ENCODE measurements at regions of chr18 and their contacts with region 1.

Region 1: DNA sequence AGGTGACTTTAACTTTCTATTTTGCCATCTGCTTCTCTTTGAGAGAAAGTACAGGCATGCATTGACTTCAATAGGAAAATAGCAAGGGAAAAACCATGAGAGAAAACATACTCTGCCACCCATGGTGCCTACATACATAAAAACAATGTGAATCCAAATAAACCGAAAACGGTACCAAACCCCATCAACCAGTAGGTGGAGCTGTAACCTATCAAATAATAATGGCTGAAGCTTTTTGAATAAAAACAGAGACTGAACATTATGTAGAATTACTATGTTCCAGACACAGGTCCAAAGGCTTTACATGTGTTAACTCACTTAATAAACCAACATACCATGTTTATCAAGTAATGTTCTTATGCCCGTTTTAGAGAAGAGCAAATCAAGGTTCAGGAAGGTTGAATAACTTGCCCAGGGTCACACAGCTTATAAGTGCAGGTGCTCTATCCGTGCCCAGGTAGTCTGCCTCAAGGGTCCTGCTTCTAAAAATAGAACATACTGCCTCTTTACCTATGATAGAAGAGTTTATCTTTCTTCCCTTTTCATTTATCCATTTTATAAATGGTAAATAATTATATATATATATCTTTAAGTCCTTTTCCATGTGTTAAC is 293.9 kb upstream of the SYT4 start:
- DNase-seq: peak; percentile 28
- H3K4me3 Mint-ChIP-seq: no peak overlapping the region
- H3K27ac Mint-ChIP-seq: no peak overlapping the region
- H3K4me1 Mint-ChIP-seq: no peaks in the 10 kb centered on the region
- H3K27me3 Mint-ChIP-seq: no peaks in the 10 kb centered on the region

Region 2: DNA sequence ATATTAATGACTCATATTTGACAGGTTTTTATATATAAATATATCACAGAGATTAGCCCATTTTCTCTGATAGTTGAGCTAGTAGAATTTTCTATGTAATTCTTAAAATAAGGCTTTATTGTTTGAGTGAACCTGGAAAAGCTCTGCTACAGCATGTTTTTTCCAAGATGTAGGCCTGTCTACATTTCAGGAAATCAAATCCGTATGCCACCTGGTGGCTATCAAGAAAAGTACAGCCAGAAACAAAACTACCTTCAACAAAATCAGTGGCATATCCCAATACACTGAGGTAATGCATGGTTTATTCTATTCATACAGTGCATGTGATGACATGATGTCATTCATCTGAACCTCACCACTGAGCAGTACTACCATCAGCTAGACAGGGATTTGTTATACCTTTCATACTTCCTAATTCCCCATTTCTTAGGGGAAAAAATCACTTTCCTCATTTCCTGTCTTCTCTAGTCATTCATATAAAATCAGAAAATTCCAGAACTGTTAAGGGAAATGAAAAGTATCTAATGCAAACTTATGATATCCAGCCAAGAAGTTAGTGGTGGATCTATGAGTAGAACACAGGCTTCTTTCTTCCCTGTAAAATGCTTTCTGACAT is 16.5 kb after region 1 on chr18:
- CTCF ChIA-PET with region 1: interaction called, 35 read pairs
- intact Hi-C with region 1: loop called (anchors 2 kb)
- DNase-seq: no peak
- H3K4me3 Mint-ChIP-seq: no peak overlapping the region
- H3K27ac Mint-ChIP-seq: no peak overlapping the region
- H3K4me1 Mint-ChIP-seq: no peaks in the 10 kb centered on the region
- H3K27me3 Mint-ChIP-seq: no peaks in the 10 kb centered on the region

Region 3: GRCh38 chr18:43596105-43596712 is 25.0 kb after region 1 on chr18:
- CTCF ChIA-PET with region 1: interaction called, 12 read pairs
- intact Hi-C with region 1: no loop called
- DNase-seq: no peak
- H3K4me3 Mint-ChIP-seq: no peak overlapping the region
- H3K27ac Mint-ChIP-seq: no peak overlapping the region
- H3K4me1 Mint-ChIP-seq: no peaks in the 10 kb centered on the region
- H3K27me3 Mint-ChIP-seq: peaks cover 3% of the 10 kb centered on the region

Region 4: DNA sequence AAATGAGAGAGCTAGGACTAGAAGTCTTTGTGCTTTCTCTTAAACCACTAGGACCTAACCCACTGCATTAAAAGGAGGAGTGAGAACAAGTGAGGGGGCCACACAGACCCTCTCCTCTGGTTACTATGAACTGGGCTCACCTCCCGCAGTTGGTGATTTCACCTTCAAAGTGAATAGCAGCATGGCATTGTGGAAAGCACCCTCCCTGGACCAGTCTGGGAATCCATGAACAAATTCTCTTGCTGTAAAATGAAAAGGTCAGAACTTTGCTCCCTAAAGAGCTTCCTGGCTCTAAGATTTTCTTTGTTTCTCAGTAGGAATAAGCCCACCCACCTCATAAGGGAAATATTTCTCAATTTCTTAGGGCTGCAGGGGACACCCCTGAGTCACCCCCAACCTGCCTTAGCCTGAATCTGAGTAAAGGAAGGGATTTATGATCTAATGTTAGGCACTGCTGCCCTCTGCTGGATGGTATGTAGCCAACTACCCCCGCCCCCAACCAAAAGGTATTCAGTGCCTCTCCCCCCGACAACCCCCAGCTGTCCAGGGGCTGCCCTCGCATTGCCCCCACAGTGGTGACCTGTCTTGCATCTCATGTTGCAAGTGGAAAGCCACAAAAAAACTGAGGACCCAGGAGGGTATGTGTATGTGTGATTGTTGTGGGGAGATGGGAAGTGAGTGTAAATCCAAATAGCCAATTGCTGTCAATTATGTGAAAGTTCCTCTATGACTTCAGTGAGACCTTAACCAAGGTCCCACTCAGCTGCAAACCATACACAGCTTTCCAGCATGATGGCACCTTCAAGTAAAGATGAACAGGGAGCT is 1813.2 kb after region 1 on chr18:
- CTCF ChIA-PET with region 1: interaction called, 3 read pairs
- intact Hi-C with region 1: loop called (anchors 1 kb)
- DNase-seq: peak; percentile 59
- H3K4me3 Mint-ChIP-seq: no peak overlapping the region
- H3K27ac Mint-ChIP-seq: no peak overlapping the region
- H3K4me1 Mint-ChIP-seq: no peaks in the 10 kb centered on the region
- H3K27me3 Mint-ChIP-seq: peaks cover 23% of the 10 kb centered on the region